ENCODE measurements at regions of chr6 and their contacts with region 1.

Region 1: DNA sequence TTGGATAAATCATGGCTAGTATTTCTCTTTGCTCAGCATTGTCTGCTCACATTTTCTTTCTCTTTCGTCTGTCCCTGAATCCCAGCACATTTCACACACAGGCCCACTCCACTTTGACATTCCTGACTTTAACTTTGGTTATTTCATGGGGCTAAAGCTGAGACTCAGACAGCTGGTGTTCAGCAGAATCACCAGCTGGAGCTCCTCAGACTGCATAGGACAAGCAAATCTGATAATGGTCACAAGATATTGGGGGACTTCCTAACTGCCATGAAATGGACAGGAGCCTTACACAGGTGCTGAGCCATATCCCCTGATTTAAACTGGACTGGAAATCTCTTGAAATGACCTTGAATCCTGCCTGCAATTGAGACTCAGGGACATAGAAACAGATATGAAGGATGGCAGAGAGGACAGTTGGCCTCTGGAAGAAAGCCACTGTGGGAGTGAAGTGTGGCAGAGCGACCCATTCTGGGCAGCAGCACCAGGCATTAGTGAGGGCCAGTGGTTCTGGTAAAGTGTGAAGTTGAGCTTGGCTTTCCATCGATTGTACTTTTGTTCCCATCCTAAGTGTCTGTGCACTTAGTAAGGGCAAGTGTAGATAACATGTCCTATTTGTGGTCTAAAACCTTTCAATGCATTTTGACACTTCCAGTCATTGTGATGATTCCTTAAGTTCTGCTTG is 10.0 kb upstream of the IFNGR1 start:
- DNase-seq: no peak
- ATAC-seq: no peak
- H3K4me3 ChIP-seq: no peak overlapping the region
- H3K27ac ChIP-seq: no peak overlapping the region
- H3K4me1 ChIP-seq: peaks cover 2% of the 10 kb centered on the region
- H3K27me3 ChIP-seq: peaks cover 17% of the 10 kb centered on the region
- CTCF ChIP-seq: no peak
- POLR2A ChIP-seq: no peak
- RAD21 ChIP-seq: no peak

Region 2: DNA sequence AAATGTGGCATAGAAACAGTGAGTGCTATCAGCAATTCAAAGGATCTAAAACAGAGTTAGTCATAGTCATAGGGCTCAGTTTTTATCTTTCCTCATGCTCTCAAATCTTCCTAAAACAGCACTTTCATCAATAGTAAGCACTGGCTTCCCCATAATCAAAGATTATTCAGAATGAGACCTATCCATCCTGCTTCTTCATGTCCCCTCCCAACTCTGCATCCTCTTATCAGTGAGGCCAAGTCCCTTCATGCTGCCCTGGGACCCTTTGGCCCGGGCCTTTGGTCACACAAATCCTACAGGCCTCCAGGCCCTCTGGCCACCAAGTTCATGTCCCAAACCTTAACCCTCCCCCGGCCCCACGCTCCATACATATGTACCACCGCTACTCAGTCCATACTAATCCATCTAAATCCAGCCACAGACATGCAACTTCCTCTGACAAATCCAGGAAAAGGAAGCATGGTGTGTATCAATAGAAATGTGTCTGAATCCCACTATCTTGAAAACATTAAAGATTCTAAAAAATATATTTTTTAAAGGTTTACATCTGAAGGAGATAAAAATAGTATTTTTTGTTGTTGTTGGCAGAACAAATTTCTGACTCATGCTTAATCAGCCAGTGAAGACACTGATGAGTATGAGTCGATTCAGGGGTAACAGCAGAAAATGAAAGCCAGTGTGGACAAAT is 1234.2 kb before region 1 on chr6:
- CTCF ChIA-PET with region 1: no interaction called
- POLR2A ChIA-PET with region 1: no interaction called
- dilution Hi-C with region 1: no loop called
- in situ Hi-C with region 1: no loop called
- intact Hi-C with region 1: no loop called
- DNase-seq: peak; percentile 93
- ATAC-seq: peak; percentile 86
- H3K4me3 ChIP-seq: no peak overlapping the region; the same call in 1 of the 2 replicates
- H3K27ac ChIP-seq: peak overlapping the region; percentile 87
- H3K4me1 ChIP-seq: peaks cover 7% of the 10 kb centered on the region
- H3K27me3 ChIP-seq: no peaks in the 10 kb centered on the region
- CTCF ChIP-seq: no peak
- POLR2A ChIP-seq: no peak
- RAD21 ChIP-seq: no peak

Region 3: GRCh38 chr6:136901212-136901784 is 327.9 kb before region 1 on chr6:
- CTCF ChIA-PET with region 1: interaction called, 13 read pairs
- POLR2A ChIA-PET with region 1: no interaction called
- dilution Hi-C with region 1: no loop called
- in situ Hi-C with region 1: no loop called
- intact Hi-C with region 1: no loop called
- DNase-seq: no peak
- ATAC-seq: no peak
- H3K4me3 ChIP-seq: no peak overlapping the region
- H3K27ac ChIP-seq: no peak overlapping the region
- H3K4me1 ChIP-seq: peaks cover 2% of the 10 kb centered on the region; the same call in 1 of the 2 replicates
- H3K27me3 ChIP-seq: no peaks in the 10 kb centered on the region
- CTCF ChIP-seq: no peak
- POLR2A ChIP-seq: no peak
- RAD21 ChIP-seq: no peak

Region 4: GRCh38 chr6:137218917-137219663 is 10.1 kb before region 1 on chr6 and contains the start of gene IFNGR1:
- CTCF ChIA-PET with region 1: no interaction called
- POLR2A ChIA-PET with region 1: no interaction called
- dilution Hi-C with region 1: no loop called
- in situ Hi-C with region 1: no loop called
- intact Hi-C with region 1: no loop called
- DNase-seq: peak; percentile 86
- ATAC-seq: peak; percentile 97
- H3K4me3 ChIP-seq: peak within 1 kb of the TSS; percentile 96
- H3K27ac ChIP-seq: peak within 1 kb of the TSS; percentile 99
- H3K4me1 ChIP-seq: peaks cover 2% of the 10 kb centered on the region
- H3K27me3 ChIP-seq: no peaks in the 10 kb centered on the region
- CTCF ChIP-seq: no peak
- POLR2A ChIP-seq: peak; percentile 86
- RAD21 ChIP-seq: no peak
- total RNA-seq, gene IFNGR1: 25.6 and 34.2 TPM in 2 replicates

Measured in IMR-90 (cell line).